CD8-positive, alpha-beta T cell (primary cell): ENCODE measurements at regions of chr1 and their contacts with region 1.

Region 1: DNA sequence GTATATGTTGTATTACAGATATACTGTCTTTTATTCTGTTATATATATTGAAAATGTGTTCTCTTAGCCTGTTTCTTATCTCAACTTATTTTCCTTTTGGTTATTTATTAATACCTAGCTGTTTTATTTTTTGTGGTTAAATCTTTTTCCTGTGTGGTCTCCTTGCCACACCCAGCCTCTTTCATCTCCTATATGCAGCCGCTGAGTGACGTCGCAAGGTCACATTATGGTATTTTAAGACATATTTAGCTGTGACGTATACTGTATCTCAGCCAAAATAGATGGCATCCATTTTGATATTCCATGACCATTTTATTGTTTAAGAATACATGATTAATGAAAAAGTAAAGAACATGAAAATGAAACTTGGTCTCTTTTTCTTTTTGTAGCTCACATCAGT is 29.1 kb downstream of the CENPF start:
- DNase-seq: peak in 6 of 9 experiments; percentile 5 to 79 (median 46)
- ATAC-seq: peak; percentile 81
- H3K4me3 ChIP-seq: no peak overlapping the region
- H3K4me3 Mint-ChIP-seq: peak overlapping the region; percentile 42
- H3K27ac ChIP-seq: no peak overlapping the region
- H3K27ac Mint-ChIP-seq: peak overlapping the region; percentile 78
- H3K4me1 ChIP-seq: peaks cover 10% of the 10 kb centered on the region
- H3K4me1 Mint-ChIP-seq: peaks cover 19% of the 10 kb centered on the region
- H3K27me3 ChIP-seq: no peaks in the 10 kb centered on the region
- H3K27me3 Mint-ChIP-seq: no peaks in the 10 kb centered on the region
- CTCF ChIP-seq: no peak

Region 2: GRCh38 chr1:215146341-215146826 is 514.3 kb after region 1 on chr1:
- CTCF ChIA-PET with region 1: no interaction called
- POLR2A ChIA-PET with region 1: no interaction called
- intact Hi-C with region 1: loop called (anchors 2 to 10 kb)
- DNase-seq: no peak
- ATAC-seq: no peak
- H3K4me3 ChIP-seq: no peak overlapping the region
- H3K4me3 Mint-ChIP-seq: no peak overlapping the region
- H3K27ac ChIP-seq: no peak overlapping the region
- H3K27ac Mint-ChIP-seq: no peak overlapping the region
- H3K4me1 ChIP-seq: no peaks in the 10 kb centered on the region
- H3K4me1 Mint-ChIP-seq: no peaks in the 10 kb centered on the region
- H3K27me3 ChIP-seq: no peaks in the 10 kb centered on the region
- H3K27me3 Mint-ChIP-seq: no peaks in the 10 kb centered on the region
- CTCF ChIP-seq: no peak

Region 3: GRCh38 chr1:215526553-215527151 is 894.6 kb after region 1 on chr1:
- CTCF ChIA-PET with region 1: interaction called, 32 read pairs
- POLR2A ChIA-PET with region 1: no interaction called
- intact Hi-C with region 1: loop called in 1 of 2 experiments (anchors 1 kb)
- DNase-seq: peak in 2 of 9 experiments; percentile 37 to 55
- ATAC-seq: no peak
- H3K4me3 ChIP-seq: no peak overlapping the region
- H3K4me3 Mint-ChIP-seq: no peak overlapping the region
- H3K27ac ChIP-seq: no peak overlapping the region
- H3K27ac Mint-ChIP-seq: no peak overlapping the region
- H3K4me1 ChIP-seq: no peaks in the 10 kb centered on the region
- H3K4me1 Mint-ChIP-seq: no peaks in the 10 kb centered on the region
- H3K27me3 ChIP-seq: no peaks in the 10 kb centered on the region
- H3K27me3 Mint-ChIP-seq: peaks cover 9% of the 10 kb centered on the region
- CTCF ChIP-seq: peak; percentile 87

Region 4: GRCh38 chr1:215606564-215607168 is 974.6 kb after region 1 on chr1:
- CTCF ChIA-PET with region 1: no interaction called
- POLR2A ChIA-PET with region 1: no interaction called
- intact Hi-C with region 1: loop called in 1 of 2 experiments (anchors 5 kb)
- DNase-seq: no peak
- ATAC-seq: no peak
- H3K4me3 ChIP-seq: no peak overlapping the region
- H3K4me3 Mint-ChIP-seq: no peak overlapping the region
- H3K27ac ChIP-seq: no peak overlapping the region
- H3K27ac Mint-ChIP-seq: no peak overlapping the region
- H3K4me1 ChIP-seq: no peaks in the 10 kb centered on the region
- H3K4me1 Mint-ChIP-seq: no peaks in the 10 kb centered on the region
- H3K27me3 ChIP-seq: no peaks in the 10 kb centered on the region
- H3K27me3 Mint-ChIP-seq: no peaks in the 10 kb centered on the region
- CTCF ChIP-seq: no peak